Posterior cingulate gyrus (tissue), 11 donors: ENCODE measurements at regions of chr1 and their contacts with region 1.

Region 1: DNA sequence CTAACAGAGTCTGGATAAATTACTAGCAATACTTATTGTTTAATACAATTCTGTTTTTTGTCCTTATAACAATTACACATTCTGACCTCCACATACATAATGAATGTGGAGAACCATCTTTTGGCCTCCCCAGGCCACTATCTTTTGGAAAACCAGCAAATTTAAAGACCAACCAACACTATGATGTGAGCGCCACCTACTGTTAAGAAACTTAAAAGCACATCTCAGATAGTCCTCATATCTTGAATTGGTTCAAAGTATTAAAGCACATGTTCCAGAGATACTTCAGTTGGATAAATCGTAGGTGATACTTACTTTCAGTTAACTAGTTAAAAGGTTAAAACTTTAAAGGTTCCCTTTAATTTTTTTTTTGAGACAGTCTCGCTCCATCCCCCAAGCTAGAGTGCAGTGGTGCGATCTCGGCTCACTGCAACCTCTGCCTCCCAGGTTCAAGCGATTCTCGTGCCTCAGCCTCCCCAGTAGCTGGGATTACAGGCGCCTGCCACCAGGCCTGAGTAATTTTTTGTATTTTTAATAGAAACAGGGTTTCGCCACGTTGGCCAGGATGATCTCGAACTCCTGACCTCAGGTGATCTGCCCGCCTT is 29.3 kb upstream of the USP1 start:
- DNase-seq: no peak

Region 2: GRCh38 chr1:62175568-62176179 is 231.8 kb before region 1 on chr1:
- intact Hi-C with region 1: loop called (anchors 1 kb)
- DNase-seq: peak in 5 of 10 donors; percentile 20 to 82 (median 43)

Region 3: DNA sequence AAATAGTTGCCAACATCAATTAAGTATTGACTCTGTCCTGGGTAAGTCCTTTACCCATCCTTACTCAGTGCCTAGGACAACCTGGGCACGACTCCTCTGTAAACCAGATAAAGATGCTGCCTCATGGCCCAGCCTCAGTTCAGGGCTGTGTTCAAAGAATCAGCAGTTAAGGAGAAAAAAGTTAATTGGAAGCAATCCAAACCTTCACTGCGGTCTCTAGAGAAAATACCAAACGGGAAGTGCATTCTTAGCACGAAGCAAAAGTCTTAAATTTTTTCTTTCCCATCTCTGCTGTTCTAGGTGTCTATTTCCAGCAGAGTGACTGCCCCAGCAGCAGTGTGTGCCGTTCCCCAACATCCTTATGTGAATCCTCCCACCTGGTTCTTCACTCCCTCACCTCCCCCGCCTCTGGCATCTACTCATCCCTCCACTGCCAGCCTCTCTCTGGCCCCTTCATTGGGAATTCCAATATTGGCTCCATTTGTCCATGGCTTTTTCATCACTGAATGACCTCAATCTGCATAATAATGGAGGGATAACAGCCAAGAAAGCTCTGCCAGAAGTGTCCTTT is 111.5 kb before region 1 on chr1:
- intact Hi-C with region 1: loop called (anchors 10 kb)
- DNase-seq: peak in 4 of 10 donors; percentile 27 to 89 (median 60)

Region 4: DNA sequence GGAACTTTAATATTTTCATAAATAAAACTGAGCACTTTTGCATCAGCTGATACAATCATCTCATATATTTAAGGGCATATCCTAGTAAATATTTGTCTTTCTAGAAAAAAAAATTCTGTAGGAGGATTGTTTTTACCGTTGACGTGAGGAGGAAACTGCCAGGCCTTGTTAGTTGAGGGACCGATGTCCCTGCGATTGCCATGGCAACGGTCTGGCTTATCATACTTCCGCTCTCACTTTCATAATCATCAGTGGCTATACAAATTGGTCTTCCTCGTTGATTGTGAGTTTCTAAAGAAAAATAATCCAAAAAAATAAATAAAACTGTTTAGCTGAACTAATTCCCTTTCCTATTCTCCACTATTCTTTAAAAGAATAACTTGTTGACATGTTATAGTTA is 120.5 kb after region 1 on chr1:
- intact Hi-C with region 1: no loop called
- DNase-seq: peak in 1 of 10 donors; percentile 39